ENCODE measurements at regions of chr4 and their contacts with region 1.

Region 1: GRCh38 chr4:15963001-15963451 is at the start of gene FGFBP2:
- DNase-seq: peak; percentile 75
- H3K4me3 ChIP-seq: no peak within 1 kb of the TSS
- H3K27ac ChIP-seq: no peak within 1 kb of the TSS
- H3K4me1 ChIP-seq: no peaks in the 10 kb centered on the region
- H3K27me3 ChIP-seq: no peaks in the 10 kb centered on the region
- CTCF ChIP-seq: peak; percentile 68
- total RNA-seq, gene FGFBP2: not detected in 2 replicates

Region 2: DNA sequence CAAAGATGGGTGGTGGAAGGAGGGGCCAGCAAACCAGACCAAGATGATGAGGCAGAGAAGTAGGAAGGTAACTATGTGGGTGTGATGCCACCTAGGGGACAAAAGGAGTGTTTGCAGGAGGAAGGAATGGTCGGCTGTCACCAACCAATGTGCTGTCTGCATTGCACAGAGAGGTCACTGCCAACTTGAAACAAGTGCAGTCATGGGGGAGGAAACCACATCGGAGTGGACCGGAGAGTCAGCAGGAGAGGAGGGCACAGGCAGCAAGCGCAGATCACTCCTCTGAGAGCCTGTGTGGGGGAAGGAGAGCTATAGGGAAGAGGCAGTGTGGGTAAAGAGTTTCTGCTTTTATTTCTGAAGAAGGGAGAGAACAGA is 38.4 kb after region 1 on chr4:
- CTCF ChIA-PET with region 1: no interaction called
- POLR2A ChIA-PET with region 1: no interaction called
- intact Hi-C with region 1: loop called (anchors 5 kb)
- DNase-seq: peak; percentile 82
- H3K4me3 ChIP-seq: no peak overlapping the region
- H3K27ac ChIP-seq: no peak overlapping the region
- H3K4me1 ChIP-seq: no peaks in the 10 kb centered on the region
- H3K27me3 ChIP-seq: no peaks in the 10 kb centered on the region
- CTCF ChIP-seq: peak; percentile 90

Region 3: GRCh38 chr4:16264798-16265197 is 301.8 kb after region 1 on chr4:
- CTCF ChIA-PET with region 1: interaction called, 9 read pairs
- POLR2A ChIA-PET with region 1: no interaction called
- intact Hi-C with region 1: loop called (anchors 2 kb)
- DNase-seq: peak; percentile 67
- H3K4me3 ChIP-seq: no peak overlapping the region
- H3K27ac ChIP-seq: no peak overlapping the region
- H3K4me1 ChIP-seq: peaks cover 5% of the 10 kb centered on the region
- H3K27me3 ChIP-seq: no peaks in the 10 kb centered on the region
- CTCF ChIP-seq: peak; percentile 65

Measured in A673 (cell line).